GM13976 (cell line): ENCODE measurements at regions of chr3 and their contacts with region 1.

Region 1: DNA sequence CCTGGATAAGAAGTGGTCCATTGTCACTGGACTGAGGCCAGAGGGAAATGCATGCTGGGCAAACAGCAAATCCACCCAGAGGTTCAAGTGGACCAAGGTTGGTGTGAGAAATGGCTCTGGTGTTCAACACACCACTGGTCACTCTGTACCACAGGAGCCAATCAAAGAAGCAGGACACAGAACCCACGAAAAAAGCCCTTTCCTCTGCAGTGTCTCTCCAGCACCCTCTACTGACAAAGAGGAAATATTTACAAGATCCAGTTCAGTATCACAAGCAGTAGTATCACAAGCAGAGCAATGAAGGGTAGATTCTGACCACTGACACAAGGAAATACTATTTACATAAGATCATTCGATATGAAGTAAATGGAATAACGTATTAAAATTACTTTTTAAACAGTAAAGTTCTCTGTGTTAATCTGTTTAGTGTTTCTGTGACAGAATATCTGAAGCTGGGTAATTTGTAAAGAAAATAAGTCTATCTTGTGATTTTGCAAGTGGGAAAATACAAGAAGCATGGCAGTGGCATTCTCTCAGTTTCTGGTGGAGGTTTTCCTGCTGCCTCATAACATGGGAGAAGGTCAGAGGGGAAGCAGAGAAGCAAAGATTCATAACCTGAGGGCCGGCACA is 390.7 kb downstream of the EFHB start:
- DNase-seq: peak; percentile 9
- CTCF ChIP-seq: peak; percentile 70

Region 2: GRCh38 chr3:19348929-19349564 is 194.3 kb before region 1 on chr3:
- in situ Hi-C with region 1: loop called (anchors 10 kb)
- DNase-seq: no peak
- CTCF ChIP-seq: peak; percentile 65